Right ventricle myocardium superior (tissue), 1 donor: ENCODE measurements at regions of chr10 and their contacts with region 1.

Region 1: GRCh38 chr10:68717435-68717834 is 3.6 kb upstream of the CCAR1 start:
- DNase-seq: no peak
- ATAC-seq: no peak

Region 2: GRCh38 chr10:68543004-68543918 is 174.2 kb before region 1 on chr10:
- intact Hi-C with region 1: loop called (anchors 10 kb)
- DNase-seq: no peak
- ATAC-seq: no peak

Region 3: GRCh38 chr10:68560943-68561864 is 156.2 kb before region 1 on chr10:
- intact Hi-C with region 1: no loop called
- DNase-seq: no peak
- ATAC-seq: peak; percentile 54

Region 4: GRCh38 chr10:68600041-68600778 is 117.2 kb before region 1 on chr10:
- intact Hi-C with region 1: no loop called
- DNase-seq: peak; percentile 81
- ATAC-seq: peak; percentile 96

Region 5: GRCh38 chr10:69018613-69019012 is 301.2 kb after region 1 on chr10:
- intact Hi-C with region 1: no loop called
- DNase-seq: no peak
- ATAC-seq: no peak